Activated T-helper 1 cell treated with anti-CD3 and anti-CD28 coated beads, Interleukin-12 subunit alpha, Interleukin-12 subunit beta, Interleukin-2, Interleukin-4 antibody, amounts not matched to agents 30 ng/mL and 10 ng/mL and 1 ng/mL, durations not matched to agents 14 hours and 24 hours and 36 hours (primary cell): ENCODE measurements at regions of chr17 and their contacts with region 1.

Region 1: DNA sequence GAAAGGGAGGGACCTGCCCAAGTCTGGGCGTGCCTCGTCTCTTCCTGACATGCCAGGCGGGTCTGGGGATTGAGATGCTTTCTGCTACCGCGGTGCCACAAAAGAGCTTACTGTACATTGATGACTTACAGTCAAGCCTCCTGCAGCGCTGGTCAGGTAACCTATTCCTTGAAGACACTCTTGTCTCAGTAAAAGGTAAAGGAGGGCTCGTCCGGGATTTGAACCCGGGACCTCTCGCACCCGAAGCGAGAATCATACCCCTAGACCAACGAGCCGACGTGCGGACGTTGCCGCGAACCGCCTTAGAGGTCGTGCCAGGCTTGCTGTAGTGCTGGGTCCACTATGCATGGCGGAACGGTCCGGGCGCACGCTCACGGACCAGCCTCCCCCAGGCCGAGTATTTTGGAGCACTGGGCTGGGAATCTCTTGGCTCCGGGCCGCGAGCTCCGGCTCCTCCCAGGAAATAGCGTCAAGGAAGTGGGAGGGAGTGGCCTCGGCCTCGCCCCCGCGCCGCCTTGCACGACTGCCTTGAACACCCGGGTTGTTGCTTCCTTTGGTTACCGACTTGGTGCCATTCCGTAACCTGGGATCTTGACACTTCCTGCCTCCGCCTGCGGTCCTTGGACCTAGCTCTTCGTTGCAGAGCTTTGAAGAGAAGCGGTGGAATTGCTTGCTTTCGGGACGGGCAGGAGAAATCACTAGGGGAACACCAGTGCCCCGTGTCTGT is 12.4 kb upstream of the AURKB start:
- DNase-seq: peak; percentile 85
- H3K4me3 Mint-ChIP-seq: peak overlapping the region; percentile 97
- H3K27ac Mint-ChIP-seq: peak overlapping the region; percentile 98
- H3K4me1 Mint-ChIP-seq: peaks cover 70% of the 10 kb centered on the region
- H3K27me3 Mint-ChIP-seq: peaks cover 21% of the 10 kb centered on the region

Region 2: DNA sequence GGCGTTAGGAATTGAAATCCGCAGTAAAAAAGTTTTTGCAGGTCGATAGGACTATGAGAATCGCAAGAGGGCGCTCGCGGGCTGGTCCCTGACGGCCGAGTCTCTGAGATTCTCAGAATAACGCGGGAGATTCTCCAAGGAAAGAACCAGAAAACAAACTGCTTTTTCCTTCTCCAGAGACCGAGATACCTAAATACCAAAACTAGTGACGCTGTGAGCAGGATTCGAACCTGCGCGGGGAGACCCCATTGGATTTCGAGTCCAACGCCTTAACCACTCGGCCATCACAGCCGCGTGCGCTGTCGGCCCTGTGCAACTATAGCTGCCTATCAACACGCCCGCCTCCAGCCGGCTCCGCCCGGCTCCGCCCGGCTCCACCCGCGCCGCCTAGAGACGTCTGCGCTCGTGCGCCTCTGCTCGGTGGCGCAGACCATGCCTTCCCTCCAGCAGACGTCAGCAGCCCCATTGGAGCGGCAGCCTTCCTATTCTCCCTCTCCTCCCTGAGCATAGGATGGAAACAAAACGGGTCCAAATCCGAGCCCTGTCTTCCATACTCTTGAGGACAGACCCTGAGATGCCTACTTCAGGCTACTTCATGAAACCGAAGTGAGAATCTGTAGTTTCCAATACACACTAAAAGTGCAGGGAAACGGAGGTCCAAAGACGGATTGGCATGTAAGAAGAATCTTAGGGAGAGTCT is 84.0 kb before region 1 on chr17:
- intact Hi-C with region 1: loop called (anchors 1 kb)
- DNase-seq: peak; percentile 95
- H3K4me3 Mint-ChIP-seq: no peak overlapping the region
- H3K27ac Mint-ChIP-seq: no peak overlapping the region
- H3K4me1 Mint-ChIP-seq: no peaks in the 10 kb centered on the region
- H3K27me3 Mint-ChIP-seq: peaks cover 11% of the 10 kb centered on the region

Region 3: GRCh38 chr17:8189711-8190477 is 32.9 kb before region 1 on chr17 and contains the start of gene BORCS6:
- intact Hi-C with region 1: loop called (anchors 1 kb)
- DNase-seq: peak; percentile 94
- H3K4me3 Mint-ChIP-seq: no peak within 1 kb of the TSS
- H3K27ac Mint-ChIP-seq: peak within 1 kb of the TSS; percentile 84
- H3K4me1 Mint-ChIP-seq: peaks cover 11% of the 10 kb centered on the region
- H3K27me3 Mint-ChIP-seq: no peaks in the 10 kb centered on the region
- total RNA-seq, gene BORCS6: 6.3 and 6.7 TPM in 2 replicates

Region 4: DNA sequence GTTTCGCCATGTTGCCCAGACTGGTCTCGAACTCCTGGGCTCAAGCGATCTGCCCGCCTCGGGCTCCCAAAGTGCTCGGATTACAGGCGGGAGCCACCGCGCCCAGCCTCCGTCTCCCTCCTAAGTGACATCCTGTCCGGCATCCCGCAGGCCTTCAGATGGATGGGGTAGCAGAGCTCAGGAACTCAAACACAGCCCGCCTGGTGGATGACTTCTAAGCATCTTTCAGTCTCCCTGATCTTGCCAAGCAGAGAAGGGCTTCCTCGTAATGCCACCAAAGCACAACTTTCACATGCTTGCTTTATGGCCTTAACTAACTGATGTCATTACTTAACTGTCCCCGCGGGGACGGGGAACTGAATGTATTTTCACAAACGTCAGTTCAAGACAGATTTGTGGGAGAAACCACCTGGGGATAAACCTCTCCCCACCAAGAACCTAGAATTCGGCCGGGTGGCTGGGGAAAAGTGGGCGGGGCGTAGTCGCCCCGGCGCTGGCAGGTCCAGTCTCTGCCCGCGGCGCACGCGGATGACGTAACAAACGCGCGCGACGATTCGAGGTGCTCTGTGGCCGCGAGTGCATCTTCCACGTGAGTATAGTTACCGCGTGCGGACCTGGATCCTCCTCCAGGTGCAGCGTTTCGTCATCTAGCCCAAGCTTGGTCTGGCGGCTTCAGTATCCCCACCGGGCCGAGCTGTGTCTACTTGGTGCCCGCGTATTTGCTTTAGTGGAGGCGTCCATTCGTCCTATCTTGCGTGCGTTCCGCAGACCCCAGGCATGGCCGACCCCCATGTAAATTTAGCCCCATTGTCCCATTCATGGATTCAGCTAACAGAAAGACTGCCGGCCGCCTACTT is 26.2 kb after region 1 on chr17 and contains the start of gene PFAS:
- intact Hi-C with region 1: loop called (anchors 1 kb)
- DNase-seq: peak; percentile 95
- H3K4me3 Mint-ChIP-seq: peak within 1 kb of the TSS; percentile 98
- H3K27ac Mint-ChIP-seq: peak within 1 kb of the TSS; percentile 100
- H3K4me1 Mint-ChIP-seq: peaks cover 40% of the 10 kb centered on the region
- H3K27me3 Mint-ChIP-seq: peaks cover 1% of the 10 kb centered on the region
- total RNA-seq, gene PFAS: 189 and 204 TPM in 2 replicates

Region 5: GRCh38 chr17:8337802-8338752 is 115.3 kb after region 1 on chr17:
- intact Hi-C with region 1: no loop called
- DNase-seq: no peak
- H3K4me3 Mint-ChIP-seq: no peak overlapping the region
- H3K27ac Mint-ChIP-seq: no peak overlapping the region
- H3K4me1 Mint-ChIP-seq: peaks cover 13% of the 10 kb centered on the region
- H3K27me3 Mint-ChIP-seq: peaks cover 8% of the 10 kb centered on the region

Region 6: DNA sequence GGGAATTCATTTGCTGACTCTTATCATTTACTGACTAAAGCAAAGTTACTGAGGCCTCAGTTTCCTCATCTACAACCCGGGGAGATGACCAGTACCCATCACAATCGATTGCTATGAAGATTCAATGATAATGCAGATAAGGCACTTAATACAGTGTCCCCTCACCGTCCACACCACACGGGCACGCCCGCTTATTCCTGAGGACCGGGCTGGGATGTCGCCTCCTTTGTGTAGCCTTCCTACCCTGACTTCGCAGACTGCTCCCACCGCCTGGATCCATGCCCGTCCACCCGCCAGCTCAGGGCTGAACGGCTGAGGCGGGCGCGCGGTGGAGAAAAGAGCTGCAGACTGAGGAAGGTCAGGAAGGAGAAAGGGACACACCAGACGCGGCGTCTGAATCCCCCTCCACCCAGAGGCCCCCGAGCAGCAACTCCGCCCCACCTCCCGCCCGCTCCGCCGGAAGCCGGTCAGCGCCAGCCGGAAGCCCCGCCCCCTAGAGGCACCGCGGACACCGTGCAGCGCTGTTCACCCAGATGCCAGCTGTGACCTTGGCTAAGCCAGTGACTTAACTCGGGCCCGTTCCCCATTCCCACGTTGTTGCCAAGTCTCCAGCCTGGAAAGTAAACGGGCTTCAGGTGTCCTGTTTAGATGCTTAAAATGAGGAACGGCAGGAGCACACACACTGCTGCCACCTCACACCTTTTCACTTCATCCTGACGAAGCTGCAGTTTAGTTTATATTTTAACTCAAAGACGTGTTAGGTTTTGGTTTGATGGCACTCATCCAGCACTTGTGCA is 153.7 kb after region 1 on chr17 and contains the start of gene KRABD2:
- intact Hi-C with region 1: loop called (anchors 10 kb)
- DNase-seq: peak; percentile 86
- H3K4me3 Mint-ChIP-seq: peak within 1 kb of the TSS; percentile 86
- H3K27ac Mint-ChIP-seq: peak within 1 kb of the TSS; percentile 75
- H3K4me1 Mint-ChIP-seq: peaks cover 57% of the 10 kb centered on the region
- H3K27me3 Mint-ChIP-seq: no peaks in the 10 kb centered on the region

Region 7: DNA sequence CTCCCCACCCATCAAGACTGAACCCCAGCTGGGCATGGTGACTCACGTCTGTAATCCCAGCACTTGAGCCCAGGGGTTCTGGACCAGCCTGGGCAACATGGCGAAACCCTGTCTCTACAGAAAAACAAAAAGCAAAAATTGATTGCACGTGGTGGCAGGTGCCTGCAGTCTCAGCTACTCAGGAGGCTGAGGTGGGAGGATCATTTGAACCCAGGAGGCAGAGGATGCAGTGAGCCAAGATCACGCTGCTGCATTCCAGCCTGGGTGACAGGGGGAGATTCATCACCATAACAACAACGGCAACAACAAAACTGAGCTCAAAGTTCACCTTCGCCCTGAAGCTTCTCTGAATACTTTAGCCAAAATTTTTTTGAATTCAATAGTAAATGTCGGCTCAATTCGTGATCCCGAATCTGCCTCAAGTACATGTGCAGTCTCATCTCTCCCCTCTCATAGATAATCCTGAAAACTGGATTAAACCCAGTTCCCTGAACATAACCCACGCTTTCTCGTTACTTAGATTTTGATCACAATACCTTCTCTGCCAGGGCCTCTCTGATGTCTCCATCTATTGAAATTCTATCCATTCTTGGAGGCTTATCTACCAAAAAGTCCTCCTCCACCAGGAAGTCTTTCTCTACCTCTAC is 421.2 kb after region 1 on chr17:
- intact Hi-C with region 1: no loop called
- DNase-seq: no peak
- H3K4me3 Mint-ChIP-seq: no peak overlapping the region
- H3K27ac Mint-ChIP-seq: no peak overlapping the region
- H3K4me1 Mint-ChIP-seq: no peaks in the 10 kb centered on the region
- H3K27me3 Mint-ChIP-seq: peaks cover 2% of the 10 kb centered on the region